ENCODE measurements at regions of chr1 and their contacts with region 1.

Region 1: GRCh38 chr1:107648071-107648470 is 316.9 kb downstream of the VAV3 start:
- DNase-seq: peak; percentile 91
- ATAC-seq: peak; percentile 99
- H3K4me3 ChIP-seq: no peak overlapping the region
- H3K27ac ChIP-seq: peak overlapping the region; percentile 58
- H3K4me1 ChIP-seq: peaks cover 24% of the 10 kb centered on the region
- H3K27me3 ChIP-seq: no peaks in the 10 kb centered on the region
- CTCF ChIP-seq: no peak

Region 2: GRCh38 chr1:107609808-107610207 is 38.3 kb before region 1 on chr1:
- CTCF ChIA-PET with region 1: no interaction called
- POLR2A ChIA-PET with region 1: no interaction called
- intact Hi-C with region 1: loop called (anchors 2 kb)
- DNase-seq: peak; percentile 90
- ATAC-seq: peak; percentile 98
- H3K4me3 ChIP-seq: no peak overlapping the region
- H3K27ac ChIP-seq: peak overlapping the region; percentile 53
- H3K4me1 ChIP-seq: peaks cover 16% of the 10 kb centered on the region
- H3K27me3 ChIP-seq: no peaks in the 10 kb centered on the region
- CTCF ChIP-seq: no peak

Region 3: DNA sequence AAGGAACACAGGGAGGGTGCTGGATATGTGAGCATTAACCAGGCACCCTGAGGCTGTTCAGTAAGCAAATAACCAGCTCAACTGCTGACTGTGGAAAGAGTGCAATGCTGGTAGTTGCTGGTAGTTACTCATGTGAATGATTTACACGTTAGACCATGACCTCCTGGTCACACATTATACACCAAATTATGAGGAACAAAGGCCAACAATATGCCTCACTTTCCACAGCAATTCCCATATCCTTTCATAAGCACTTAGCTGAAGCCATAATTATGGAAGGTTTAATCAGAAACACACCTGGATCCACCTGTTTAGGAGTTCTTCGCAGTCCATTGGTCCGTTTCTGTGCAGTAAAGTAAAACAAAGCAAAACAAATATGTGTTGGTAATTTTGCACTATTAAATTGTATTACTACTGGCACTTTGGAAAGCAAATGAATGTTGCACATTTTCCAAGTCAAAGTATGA is 35.2 kb after region 1 on chr1:
- CTCF ChIA-PET with region 1: no interaction called
- POLR2A ChIA-PET with region 1: no interaction called
- intact Hi-C with region 1: loop called (anchors 2 kb)
- DNase-seq: peak; percentile 85
- ATAC-seq: peak; percentile 89
- H3K4me3 ChIP-seq: peak overlapping the region; percentile 38; the same call in 1 of the 2 replicates
- H3K27ac ChIP-seq: peak overlapping the region; percentile 92
- H3K4me1 ChIP-seq: peaks cover 41% of the 10 kb centered on the region
- H3K27me3 ChIP-seq: no peaks in the 10 kb centered on the region
- CTCF ChIP-seq: no peak